ENCODE measurements at regions of chr12 and their contacts with region 1.

Region 1: GRCh38 chr12:89051065-89051677 is 301.1 kb downstream of the DUSP6 start:
- DNase-seq: peak; percentile 64
- H3K4me3 ChIP-seq: no peak overlapping the region
- H3K27ac ChIP-seq: no peak overlapping the region
- H3K4me1 ChIP-seq: no peaks in the 10 kb centered on the region
- H3K27me3 ChIP-seq: no peaks in the 10 kb centered on the region
- CTCF ChIP-seq: peak; percentile 92 to 96

Region 2: DNA sequence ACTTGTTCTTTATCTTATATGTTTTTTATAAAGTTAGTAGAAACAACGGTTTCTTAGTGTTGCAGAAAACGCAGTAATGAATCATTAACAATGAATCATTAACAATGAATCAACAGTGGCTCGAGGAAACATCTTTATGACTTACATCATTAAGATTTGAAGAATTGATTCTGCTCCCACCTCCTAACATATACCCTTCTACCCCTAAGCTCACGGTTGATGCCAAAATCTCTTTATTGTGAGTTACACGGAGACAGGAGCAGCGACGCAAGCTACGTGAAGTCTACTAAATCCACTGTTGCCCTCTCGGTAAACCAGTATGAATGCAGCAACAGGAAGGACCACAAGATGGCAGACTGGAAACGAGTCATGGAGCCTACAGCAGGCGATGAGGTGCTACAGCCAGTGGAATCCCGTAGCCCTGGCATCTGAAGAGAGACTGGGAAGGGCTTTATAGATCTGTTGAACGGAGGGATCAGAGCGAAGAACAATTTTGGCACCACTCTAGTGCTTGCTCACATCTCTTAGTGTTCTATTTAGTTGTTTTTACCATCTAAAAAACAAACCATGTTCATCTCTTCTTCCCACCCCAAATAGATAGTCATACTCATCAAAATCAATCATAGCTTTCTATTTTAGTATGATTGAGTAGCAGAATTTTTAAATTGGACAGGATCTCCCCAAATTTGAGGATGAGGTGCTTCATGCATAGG is 31.6 kb before region 1 on chr12:
- CTCF ChIA-PET with region 1: no interaction called
- dilution Hi-C with region 1: no loop called
- in situ Hi-C with region 1: no loop called
- intact Hi-C with region 1: loop called (anchors 1 kb)
- DNase-seq: peak; percentile 81
- H3K4me3 ChIP-seq: peak overlapping the region; percentile 18 to 49 (median 36)
- H3K27ac ChIP-seq: peak overlapping the region; percentile 57
- H3K4me1 ChIP-seq: peaks cover 16% of the 10 kb centered on the region
- H3K27me3 ChIP-seq: no peaks in the 10 kb centered on the region
- CTCF ChIP-seq: peak; percentile 92 to 93

Region 3: DNA sequence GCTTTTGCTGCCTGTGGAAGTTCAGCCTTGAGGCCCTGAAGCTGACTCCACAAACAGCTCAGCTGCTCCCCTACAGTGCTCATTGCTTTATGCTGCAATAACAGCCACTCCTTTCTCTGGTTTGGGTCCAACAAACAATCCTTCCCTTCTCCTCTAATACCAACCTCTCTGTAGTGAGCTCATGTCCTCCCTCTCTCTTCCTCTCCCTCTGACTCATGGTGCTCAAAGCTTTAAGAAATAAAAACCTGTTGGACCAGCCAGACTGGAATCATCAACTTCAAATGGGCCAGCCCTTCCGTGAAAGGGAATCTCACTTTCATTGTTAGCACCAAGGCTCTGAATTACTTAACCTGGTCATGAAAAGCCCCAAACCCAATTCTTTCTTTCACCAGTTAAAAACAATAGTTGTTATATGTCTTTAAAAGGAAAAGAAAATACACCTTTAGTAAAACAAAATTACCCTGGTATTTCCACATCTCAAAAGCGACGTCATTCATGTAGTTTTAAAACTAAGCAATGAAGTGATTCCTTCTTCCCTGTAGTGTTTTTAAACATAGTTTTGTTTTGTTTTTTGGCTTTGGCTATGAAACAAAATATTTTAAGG is 174.7 kb after region 1 on chr12:
- CTCF ChIA-PET with region 1: no interaction called
- dilution Hi-C with region 1: no loop called
- in situ Hi-C with region 1: no loop called
- intact Hi-C with region 1: loop called (anchors 5 kb)
- DNase-seq: peak; percentile 99
- H3K4me3 ChIP-seq: peak overlapping the region in 1 of 3 experiments; percentile 5
- H3K27ac ChIP-seq: peak overlapping the region; percentile 96
- H3K4me1 ChIP-seq: peaks cover 37% of the 10 kb centered on the region
- H3K27me3 ChIP-seq: no peaks in the 10 kb centered on the region
- CTCF ChIP-seq: no peak

Region 4: GRCh38 chr12:89306827-89307473 is 255.8 kb after region 1 on chr12:
- CTCF ChIA-PET with region 1: no interaction called
- dilution Hi-C with region 1: no loop called
- in situ Hi-C with region 1: no loop called
- intact Hi-C with region 1: no loop called
- DNase-seq: no peak
- H3K4me3 ChIP-seq: no peak overlapping the region
- H3K27ac ChIP-seq: no peak overlapping the region
- H3K4me1 ChIP-seq: peaks cover 6% of the 10 kb centered on the region
- H3K27me3 ChIP-seq: no peaks in the 10 kb centered on the region
- CTCF ChIP-seq: no peak

Region 5: GRCh38 chr12:89352492-89353187 is 301.5 kb after region 1 on chr12 and contains the start of gene DUSP6:
- CTCF ChIA-PET with region 1: no interaction called
- dilution Hi-C with region 1: loop called (anchors 5 kb)
- in situ Hi-C with region 1: loop called (anchors 5 to 10 kb)
- intact Hi-C with region 1: loop called (anchors 1 kb)
- DNase-seq: peak; percentile 100
- H3K4me3 ChIP-seq: peak within 1 kb of the TSS; percentile 85 to 93 (median 92)
- H3K27ac ChIP-seq: peak within 1 kb of the TSS; percentile 91
- H3K4me1 ChIP-seq: peaks cover 43% of the 10 kb centered on the region
- H3K27me3 ChIP-seq: no peaks in the 10 kb centered on the region
- CTCF ChIP-seq: no peak
- total RNA-seq, gene DUSP6: 190 to 291 TPM

Region 6: DNA sequence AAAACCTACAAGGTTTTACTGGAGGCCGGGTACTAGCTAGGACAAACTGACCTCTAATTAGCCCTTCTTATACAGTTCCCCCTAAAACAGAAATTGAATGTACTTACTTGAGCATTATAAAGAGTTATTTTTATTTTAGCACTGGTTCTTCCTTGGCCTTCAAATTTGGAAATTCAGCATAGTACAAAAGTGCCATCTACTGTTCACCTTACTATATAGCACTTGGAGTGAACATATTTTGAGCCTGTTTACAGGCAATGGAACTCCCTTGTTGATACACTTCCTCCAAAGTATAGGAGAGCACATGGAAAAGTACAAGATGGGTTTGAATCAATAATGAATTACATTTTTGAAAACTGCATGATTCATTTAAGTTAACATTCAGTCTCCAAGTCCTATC is 478.6 kb after region 1 on chr12:
- CTCF ChIA-PET with region 1: no interaction called
- dilution Hi-C with region 1: no loop called
- in situ Hi-C with region 1: loop called in 1 of 2 experiments (anchors 10 kb)
- intact Hi-C with region 1: loop called (anchors 1 kb)
- DNase-seq: peak; percentile 45
- H3K4me3 ChIP-seq: no peak overlapping the region
- H3K27ac ChIP-seq: no peak overlapping the region
- H3K4me1 ChIP-seq: no peaks in the 10 kb centered on the region
- H3K27me3 ChIP-seq: no peaks in the 10 kb centered on the region
- CTCF ChIP-seq: peak; percentile 75 to 76

Measured in mammary epithelial cell (primary cell).